ENCODE measurements at regions of chr10 and their contacts with region 1.

Region 1: DNA sequence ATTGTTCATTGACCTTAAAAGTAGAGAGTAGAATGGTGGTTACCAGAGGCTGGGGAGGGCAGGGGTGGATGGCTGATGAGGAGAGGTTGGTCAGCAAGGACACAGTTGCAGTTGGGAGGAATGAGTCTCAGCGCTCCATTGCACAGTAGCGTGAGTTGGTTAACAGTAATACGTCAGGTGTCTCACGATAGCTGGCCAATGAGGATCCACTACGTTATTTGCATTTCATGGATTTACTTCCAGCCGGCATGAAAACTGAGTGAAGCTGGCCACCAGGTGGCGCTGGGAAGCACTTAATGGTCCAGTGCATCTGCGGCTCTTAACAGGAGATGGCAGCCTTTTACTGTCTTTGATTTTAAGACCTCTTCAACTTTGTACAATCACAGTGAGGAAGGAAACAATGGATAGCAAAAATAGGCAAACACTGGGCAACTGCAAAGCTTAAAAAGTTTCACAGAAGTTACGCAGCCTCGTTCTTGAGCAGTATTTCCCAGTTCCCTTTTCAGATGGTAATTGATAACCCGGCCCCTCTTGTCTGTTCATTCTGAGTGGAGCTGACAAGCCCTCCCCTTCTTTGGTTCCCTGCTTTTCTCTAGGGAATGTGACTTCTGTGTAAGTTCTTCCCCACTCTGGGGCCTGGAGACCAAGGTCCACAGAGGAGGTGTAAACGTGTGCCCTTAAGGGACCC is 23.7 kb downstream of the AKR1E2 start:
- DNase-seq: peak; percentile 89 to 94
- ATAC-seq: peak; percentile 92 to 97 (median 96)
- H3K4me3 ChIP-seq: peak overlapping the region; percentile 1
- H3K27ac ChIP-seq: peak overlapping the region; percentile 10
- H3K4me1 ChIP-seq: peaks cover 7% of the 10 kb centered on the region
- H3K27me3 ChIP-seq: no peaks in the 10 kb centered on the region
- CTCF ChIP-seq: peak; percentile 99

Region 2: GRCh38 chr10:4981722-4982471 is 132.2 kb after region 1 on chr10:
- intact Hi-C with region 1: loop called (anchors 1 to 10 kb)
- DNase-seq: no peak
- ATAC-seq: peak in 3 of 4 donors; percentile 24 to 66 (median 51)
- H3K4me3 ChIP-seq: no peak overlapping the region
- H3K27ac ChIP-seq: peak overlapping the region; percentile 9
- H3K4me1 ChIP-seq: no peaks in the 10 kb centered on the region
- H3K27me3 ChIP-seq: no peaks in the 10 kb centered on the region
- CTCF ChIP-seq: peak; percentile 41

Region 3: DNA sequence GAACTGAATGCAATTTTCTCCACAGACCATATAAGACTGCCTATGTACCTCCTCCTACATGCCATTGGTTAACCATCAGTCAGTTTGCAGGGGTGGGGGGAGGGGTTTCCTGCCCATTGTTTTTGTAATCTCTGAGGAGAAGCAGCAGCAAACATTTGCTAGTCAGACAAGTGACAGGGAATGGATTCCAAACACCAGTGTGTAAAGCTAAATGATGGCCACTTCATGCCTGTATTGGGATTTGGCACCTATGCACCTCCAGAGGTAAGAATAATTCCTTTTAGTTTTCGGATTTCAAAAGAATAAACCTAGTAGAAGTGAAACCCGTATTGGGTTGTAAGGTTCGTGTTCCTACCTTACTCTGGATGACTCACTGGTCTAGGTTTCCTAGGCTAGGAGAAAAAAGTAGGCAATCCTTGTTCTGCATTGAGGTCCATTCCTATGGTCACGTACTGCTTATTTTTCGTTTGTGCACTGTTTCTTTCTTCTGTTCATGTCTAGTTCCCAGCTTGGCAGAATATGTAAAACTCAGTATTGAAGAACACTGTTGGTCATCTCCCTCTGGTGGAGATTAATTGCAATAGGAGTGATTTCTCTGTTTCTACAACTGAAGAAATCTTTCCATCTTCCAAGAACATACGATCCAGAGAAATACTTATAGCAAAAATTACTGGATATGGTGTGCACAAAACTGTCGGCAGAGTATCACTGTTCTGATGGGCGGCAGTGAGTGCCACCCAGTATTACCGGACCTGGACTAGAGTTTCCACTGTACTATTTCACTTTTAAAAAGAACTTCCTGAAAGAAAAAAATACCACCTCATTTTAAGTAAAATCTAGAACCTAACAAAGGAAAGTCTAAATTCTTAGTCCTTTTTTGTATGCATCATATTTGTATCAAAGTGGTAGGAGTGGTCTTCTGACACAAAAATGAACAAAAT is 244.8 kb after region 1 on chr10 and contains the start of gene AKR1C3:
- intact Hi-C with region 1: loop called (anchors 2 to 5 kb)
- DNase-seq: no peak
- ATAC-seq: peak; percentile 77 to 94 (median 82)
- H3K4me3 ChIP-seq: peak within 1 kb of the TSS; percentile 68
- H3K27ac ChIP-seq: peak within 1 kb of the TSS; percentile 73
- H3K4me1 ChIP-seq: no peaks in the 10 kb centered on the region
- H3K27me3 ChIP-seq: no peaks in the 10 kb centered on the region
- CTCF ChIP-seq: peak; percentile 73
- total RNA-seq, gene AKR1C3: 20.6 to 1,247 (median 39.8) TPM

Region 4: GRCh38 chr10:5283305-5284158 is 433.8 kb after region 1 on chr10:
- intact Hi-C with region 1: loop called (anchors 2 to 5 kb)
- DNase-seq: peak; percentile 63 to 64
- ATAC-seq: peak; percentile 82 to 92 (median 88)
- H3K4me3 ChIP-seq: no peak overlapping the region
- H3K27ac ChIP-seq: no peak overlapping the region
- H3K4me1 ChIP-seq: peaks cover 4% of the 10 kb centered on the region
- H3K27me3 ChIP-seq: peaks cover 0 to 1% (median 0%) of the 10 kb centered on the region in 3 donors
- CTCF ChIP-seq: peak; percentile 68

Region 5: GRCh38 chr10:5385224-5385623 is 535.5 kb after region 1 on chr10:
- intact Hi-C with region 1: loop called (anchors 5 kb)
- DNase-seq: no peak
- ATAC-seq: no peak
- H3K4me3 ChIP-seq: no peak overlapping the region
- H3K27ac ChIP-seq: no peak overlapping the region
- H3K4me1 ChIP-seq: no peaks in the 10 kb centered on the region
- H3K27me3 ChIP-seq: no peaks in the 10 kb centered on the region
- CTCF ChIP-seq: no peak

Region 6: GRCh38 chr10:5434017-5434753 is 584.5 kb after region 1 on chr10:
- intact Hi-C with region 1: loop called in 1 of 2 experiments (anchors 2 kb)
- DNase-seq: no peak
- ATAC-seq: peak; percentile 54 to 89 (median 72)
- H3K4me3 ChIP-seq: no peak overlapping the region
- H3K27ac ChIP-seq: peak overlapping the region; percentile 5
- H3K4me1 ChIP-seq: peaks cover 8% of the 10 kb centered on the region
- H3K27me3 ChIP-seq: no peaks in the 10 kb centered on the region
- CTCF ChIP-seq: peak; percentile 62